ENCODE measurements at regions of chr10 and their contacts with region 1.

Region 1: DNA sequence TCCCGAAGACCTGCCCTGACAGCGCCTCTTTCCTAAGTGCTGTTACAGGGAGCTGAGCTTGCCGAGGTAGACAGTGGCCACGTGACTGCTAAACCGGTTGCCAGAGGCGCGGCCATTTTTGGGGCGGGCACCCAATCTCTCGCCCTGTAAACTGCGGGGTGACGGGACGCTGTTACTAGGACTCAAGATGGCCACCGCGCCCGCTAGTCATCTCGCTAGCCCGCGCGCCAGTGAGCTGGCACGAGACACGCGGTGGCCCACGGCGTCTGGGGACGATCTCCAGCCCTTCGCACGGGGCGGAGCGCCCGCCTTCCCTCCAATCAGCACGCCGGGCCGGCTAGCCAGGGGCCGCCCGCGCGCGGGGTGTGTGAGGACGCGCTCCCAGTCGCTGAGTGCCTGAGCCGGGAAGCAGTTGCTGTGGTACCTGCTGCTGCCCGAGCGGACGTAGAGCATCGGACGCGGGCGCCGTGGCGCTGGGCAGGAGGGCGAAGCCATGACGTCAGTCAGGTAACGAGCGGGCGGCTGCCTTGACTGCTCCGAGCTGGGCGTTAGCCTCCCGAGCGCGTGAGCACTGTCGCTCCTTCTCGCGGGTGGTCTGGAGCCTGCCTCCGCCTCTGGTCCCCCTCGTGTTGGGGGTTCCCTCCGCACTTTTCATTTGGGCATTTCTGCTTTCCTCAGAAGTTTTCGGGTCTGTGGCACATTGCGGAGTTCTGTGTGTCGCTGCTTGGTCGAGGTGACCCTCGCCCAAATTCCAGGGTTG is 25.5 kb downstream of the ADK start:
- DNase-seq: peak; percentile 98 to 99 (median 98)
- H3K4me3 ChIP-seq: peak overlapping the region; percentile 80 to 91 (median 85)
- H3K4me3 Mint-ChIP-seq: peak overlapping the region; percentile 91 to 95
- H3K27ac ChIP-seq: peak overlapping the region; percentile 98
- H3K27ac Mint-ChIP-seq: peak overlapping the region; percentile 94 to 98 (median 97)
- H3K4me1 ChIP-seq: peaks cover 26 to 33% of the 10 kb centered on the region in 2 donors
- H3K4me1 Mint-ChIP-seq: peaks cover 23% of the 10 kb centered on the region
- H3K27me3 ChIP-seq: no peaks in the 10 kb centered on the region
- H3K27me3 Mint-ChIP-seq: peaks cover 0 to 2% (median 0%) of the 10 kb centered on the region in 3 donors
- CTCF ChIP-seq: no peak

Region 2: GRCh38 chr10:73956476-73957359 is 219.8 kb before region 1 on chr10:
- intact Hi-C with region 1: no loop called
- DNase-seq: peak; percentile 38 to 63 (median 46)
- H3K4me3 ChIP-seq: peak overlapping the region in 1 of 3 experiments; percentile 59
- H3K4me3 Mint-ChIP-seq: peak overlapping the region; percentile 67 to 86
- H3K27ac ChIP-seq: peak overlapping the region; percentile 77 to 82
- H3K27ac Mint-ChIP-seq: peak overlapping the region; percentile 89 to 97 (median 95)
- H3K4me1 ChIP-seq: peaks cover 56 to 68% of the 10 kb centered on the region in 2 donors
- H3K4me1 Mint-ChIP-seq: peaks cover 62% of the 10 kb centered on the region
- H3K27me3 ChIP-seq: no peaks in the 10 kb centered on the region
- H3K27me3 Mint-ChIP-seq: no peaks in the 10 kb centered on the region
- CTCF ChIP-seq: no peak

Region 3: DNA sequence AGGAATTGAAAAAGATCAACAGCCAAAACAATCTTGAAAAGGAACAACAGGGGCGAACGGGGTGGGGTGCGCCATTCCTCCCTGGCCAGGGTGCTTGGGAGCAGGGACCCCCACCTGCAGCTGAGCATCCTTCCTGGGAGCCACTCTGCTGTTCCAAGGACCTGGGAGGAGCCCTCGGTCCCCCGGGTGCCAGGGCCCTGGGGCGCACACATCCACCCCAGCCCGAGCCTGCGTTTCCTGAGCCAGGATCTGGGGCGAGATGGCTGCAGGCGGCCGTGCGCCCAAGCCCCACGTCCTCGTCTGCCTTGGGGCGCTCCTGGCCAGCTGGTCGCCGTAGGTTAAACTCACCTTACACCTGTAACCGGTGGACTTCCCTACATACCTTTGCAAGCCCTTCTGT is 36.6 kb before region 1 on chr10:
- intact Hi-C with region 1: loop called in 1 of 2 experiments (anchors 5 kb)
- DNase-seq: no peak
- H3K4me3 ChIP-seq: no peak overlapping the region
- H3K4me3 Mint-ChIP-seq: no peak overlapping the region
- H3K27ac ChIP-seq: no peak overlapping the region
- H3K27ac Mint-ChIP-seq: no peak overlapping the region
- H3K4me1 ChIP-seq: peaks cover 0 to 4% of the 10 kb centered on the region in 2 donors
- H3K4me1 Mint-ChIP-seq: peaks cover 6% of the 10 kb centered on the region
- H3K27me3 ChIP-seq: no peaks in the 10 kb centered on the region
- H3K27me3 Mint-ChIP-seq: no peaks in the 10 kb centered on the region
- CTCF ChIP-seq: no peak

Region 4: DNA sequence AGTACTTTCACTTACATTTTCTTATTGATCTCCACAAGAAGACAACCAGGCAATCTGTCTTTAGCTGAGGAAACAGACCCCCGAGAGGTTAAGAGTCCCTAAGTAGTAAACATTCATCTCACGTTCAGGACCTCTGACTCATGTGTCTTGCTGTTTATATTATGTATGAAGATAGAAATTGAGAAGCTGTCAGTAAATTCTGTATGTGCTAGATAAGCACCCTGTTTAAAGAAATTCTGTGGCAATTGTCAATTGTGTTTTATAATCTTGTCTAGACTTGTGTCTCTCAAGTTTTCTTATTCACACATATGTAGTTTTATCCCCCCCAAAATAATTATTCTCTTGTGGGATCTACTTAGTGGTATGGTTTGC is 11.0 kb before region 1 on chr10:
- intact Hi-C with region 1: loop called in 1 of 2 experiments (anchors 1 kb)
- DNase-seq: peak in 2 of 3 donors; percentile 32 to 59
- H3K4me3 ChIP-seq: peak overlapping the region in 1 of 3 experiments; percentile 33
- H3K4me3 Mint-ChIP-seq: no peak overlapping the region
- H3K27ac ChIP-seq: peak overlapping the region; percentile 78 to 93
- H3K27ac Mint-ChIP-seq: peak overlapping the region in 6 of 7 donors; percentile 84 to 95 (median 93)
- H3K4me1 ChIP-seq: peaks cover 64 to 67% of the 10 kb centered on the region in 2 donors
- H3K4me1 Mint-ChIP-seq: peaks cover 57% of the 10 kb centered on the region
- H3K27me3 ChIP-seq: no peaks in the 10 kb centered on the region
- H3K27me3 Mint-ChIP-seq: no peaks in the 10 kb centered on the region
- CTCF ChIP-seq: no peak

Region 5: DNA sequence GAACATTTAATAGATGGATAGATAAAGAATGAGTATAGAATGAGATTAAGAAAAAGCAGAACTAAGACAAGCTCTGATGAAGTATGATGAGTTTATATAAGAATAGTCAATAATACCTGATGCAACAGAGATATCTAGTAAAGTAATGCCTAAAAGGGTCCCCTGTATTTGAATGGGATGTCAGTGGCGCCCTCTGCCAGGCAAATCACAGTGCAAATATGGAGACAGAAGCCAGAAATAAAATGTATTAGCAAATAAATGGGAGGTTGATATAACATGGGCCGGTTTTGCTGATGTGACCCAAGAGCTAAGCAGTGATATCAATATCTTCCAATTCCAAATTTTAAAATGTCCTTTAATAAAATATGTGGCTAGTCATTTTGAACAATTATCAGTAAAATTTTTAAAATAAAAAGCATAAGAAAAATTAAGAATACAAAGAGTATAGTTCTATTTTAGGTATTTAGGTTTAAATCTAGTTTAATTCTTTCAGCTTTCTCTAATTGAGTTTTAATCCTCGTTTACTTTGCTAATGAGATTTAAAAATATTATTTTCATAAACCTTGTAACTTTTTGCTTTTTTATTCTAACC is 37.1 kb after region 1 on chr10:
- intact Hi-C with region 1: loop called in 1 of 2 experiments (anchors 5 kb)
- DNase-seq: peak; percentile 10 to 35 (median 24)
- H3K4me3 ChIP-seq: no peak overlapping the region
- H3K4me3 Mint-ChIP-seq: no peak overlapping the region
- H3K27ac ChIP-seq: no peak overlapping the region
- H3K27ac Mint-ChIP-seq: peak overlapping the region in 2 of 7 donors; percentile 5 to 7
- H3K4me1 ChIP-seq: no peaks in the 10 kb centered on the region
- H3K4me1 Mint-ChIP-seq: no peaks in the 10 kb centered on the region
- H3K27me3 ChIP-seq: no peaks in the 10 kb centered on the region
- H3K27me3 Mint-ChIP-seq: peaks cover 0 to 2% (median 1%) of the 10 kb centered on the region in 3 donors
- CTCF ChIP-seq: peak; percentile 46